ENCODE measurements at regions of chr17 and their contacts with region 1.

Region 1: DNA sequence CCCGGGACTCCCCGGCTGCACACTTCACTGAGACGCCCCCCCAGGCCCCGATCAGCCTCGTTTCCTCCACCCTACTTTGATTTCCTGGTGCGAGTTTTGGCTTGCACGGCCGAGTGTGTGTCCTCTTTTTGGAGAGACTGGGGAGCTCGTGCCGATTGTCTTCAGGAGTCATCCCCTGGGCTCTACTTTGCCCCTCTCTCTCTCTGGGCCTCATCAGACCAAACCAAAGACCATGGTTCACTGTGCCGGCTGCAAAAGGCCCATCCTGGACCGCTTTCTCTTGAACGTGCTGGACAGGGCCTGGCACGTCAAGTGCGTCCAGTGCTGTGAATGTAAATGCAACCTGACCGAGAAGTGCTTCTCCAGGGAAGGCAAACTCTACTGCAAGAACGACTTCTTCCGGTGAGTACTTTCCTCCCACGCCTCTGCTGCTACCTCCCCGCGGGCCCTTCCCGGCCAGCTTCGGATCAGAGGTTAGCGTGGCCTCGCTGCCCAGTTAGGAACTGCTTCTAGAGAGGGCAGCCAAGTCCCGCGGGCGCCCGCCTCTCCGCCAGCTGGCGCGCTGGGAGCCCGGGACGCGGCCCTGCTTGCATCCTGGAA is 791 bp downstream of the LHX1 start:
- DNase-seq: no peak

Region 2: DNA sequence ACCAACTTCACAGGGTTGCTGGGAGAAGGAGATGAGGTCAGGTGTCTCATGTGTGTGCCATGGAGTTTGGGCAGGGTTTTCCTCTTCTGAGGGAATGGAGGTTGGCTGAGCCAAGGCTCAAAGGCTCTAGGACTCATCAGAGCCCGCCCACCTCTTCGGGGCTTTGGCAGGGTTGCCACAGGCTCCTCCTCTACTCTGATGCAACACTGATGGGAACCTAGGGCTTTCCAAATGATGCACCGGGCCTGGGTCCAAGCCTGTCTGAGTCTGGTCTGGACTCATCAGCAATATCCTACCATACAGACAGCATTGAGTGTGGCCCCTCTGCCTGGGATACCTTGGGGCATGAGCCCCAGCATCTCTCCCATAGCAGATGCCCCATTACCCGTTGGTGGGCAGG is 60.3 kb before region 1 on chr17:
- CTCF ChIA-PET with region 1: no interaction called
- POLR2A ChIA-PET with region 1: no interaction called
- DNase-seq: no peak

Region 3: GRCh38 chr17:36948717-36949460 is 10.8 kb after region 1 on chr17 and contains the start of gene AATF:
- CTCF ChIA-PET with region 1: interaction called, 5 read pairs
- POLR2A ChIA-PET with region 1: interaction called, 22 read pairs
- DNase-seq: peak; percentile 90

Measured in HEK293T (cell line).